Calu3 (cell line): ENCODE measurements at regions of chr9 and their contacts with region 1.

Region 1: DNA sequence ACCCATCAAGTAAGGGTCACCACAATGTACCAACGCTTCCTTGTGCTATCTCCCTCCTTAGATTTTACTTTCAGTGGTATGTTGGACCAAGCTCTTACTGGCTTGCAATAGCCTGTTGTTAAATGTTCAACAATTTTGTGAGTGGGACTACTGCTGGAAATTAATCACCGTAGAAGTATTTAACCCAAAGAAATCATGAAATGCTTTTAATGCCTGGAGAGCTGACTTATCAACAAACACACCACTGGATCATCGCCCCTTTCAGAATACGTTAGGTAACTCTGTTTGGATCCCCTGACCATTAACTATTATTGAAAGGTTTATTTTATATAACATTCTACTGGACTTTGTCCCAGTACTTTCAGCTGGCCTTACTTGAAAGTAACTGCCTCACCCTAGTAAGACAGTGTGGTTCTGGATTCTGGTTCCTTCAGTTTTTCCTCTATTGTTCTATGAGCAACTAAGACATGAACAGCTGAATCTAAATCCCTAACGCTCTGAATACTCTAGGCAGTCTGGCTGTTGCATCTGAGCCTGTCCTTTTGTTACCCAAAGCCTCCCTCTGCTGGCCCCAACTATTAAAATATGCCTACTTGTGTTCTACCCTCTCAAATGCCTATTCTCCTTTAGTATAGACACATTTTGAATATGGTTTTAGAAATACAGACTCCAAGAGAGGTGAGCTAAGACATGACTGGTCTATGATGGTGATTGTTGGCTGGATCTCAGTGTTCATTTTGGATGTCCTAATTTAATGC is 1203.4 kb upstream of the DMAC1 start:
- DNase-seq: peak; percentile 11
- H3K4me3 Mint-ChIP-seq: no peak overlapping the region
- H3K27ac Mint-ChIP-seq: no peak overlapping the region
- H3K4me1 Mint-ChIP-seq: no peaks in the 10 kb centered on the region
- H3K27me3 Mint-ChIP-seq: no peaks in the 10 kb centered on the region
- CTCF ChIP-seq: no peak

Region 2: DNA sequence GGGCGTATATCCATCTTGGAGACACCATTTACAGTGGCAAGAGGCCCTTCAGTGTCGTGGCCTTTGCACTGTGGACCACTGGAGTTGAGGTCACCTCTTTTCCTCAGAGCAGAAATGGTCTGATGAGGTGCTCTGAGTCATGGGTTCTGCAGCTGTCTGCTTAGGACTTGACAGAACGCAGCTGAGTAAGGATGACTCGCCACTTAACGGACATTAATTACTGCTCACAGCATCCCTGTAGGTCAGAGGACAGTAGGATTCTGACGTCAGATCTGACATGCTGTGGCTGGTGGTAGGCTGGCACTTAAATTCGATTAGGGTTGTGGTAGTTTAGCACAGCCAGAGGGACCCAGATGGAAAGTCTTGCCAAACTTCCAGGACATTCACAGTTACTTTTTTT is 1682.9 kb before region 1 on chr9:
- CTCF ChIA-PET with region 1: no interaction called
- intact Hi-C with region 1: loop called (anchors 5 kb)
- DNase-seq: no peak
- H3K4me3 Mint-ChIP-seq: no peak overlapping the region
- H3K27ac Mint-ChIP-seq: no peak overlapping the region
- H3K4me1 Mint-ChIP-seq: no peaks in the 10 kb centered on the region
- H3K27me3 Mint-ChIP-seq: peaks cover 26% of the 10 kb centered on the region
- CTCF ChIP-seq: no peak

Region 3: GRCh38 chr9:8660383-8660782 is 342.6 kb before region 1 on chr9:
- CTCF ChIA-PET with region 1: no interaction called
- intact Hi-C with region 1: loop called (anchors 10 kb)
- DNase-seq: peak; percentile 45
- H3K4me3 Mint-ChIP-seq: no peak overlapping the region
- H3K27ac Mint-ChIP-seq: no peak overlapping the region
- H3K4me1 Mint-ChIP-seq: peaks cover 14% of the 10 kb centered on the region
- H3K27me3 Mint-ChIP-seq: no peaks in the 10 kb centered on the region
- CTCF ChIP-seq: no peak

Region 4: GRCh38 chr9:8917956-8918739 is 84.9 kb before region 1 on chr9:
- CTCF ChIA-PET with region 1: no interaction called
- intact Hi-C with region 1: loop called (anchors 10 kb)
- DNase-seq: no peak
- H3K4me3 Mint-ChIP-seq: no peak overlapping the region
- H3K27ac Mint-ChIP-seq: no peak overlapping the region
- H3K4me1 Mint-ChIP-seq: no peaks in the 10 kb centered on the region
- H3K27me3 Mint-ChIP-seq: no peaks in the 10 kb centered on the region
- CTCF ChIP-seq: no peak

Region 5: GRCh38 chr9:8946461-8946860 is 56.5 kb before region 1 on chr9:
- CTCF ChIA-PET with region 1: no interaction called
- intact Hi-C with region 1: no loop called
- DNase-seq: no peak
- H3K4me3 Mint-ChIP-seq: no peak overlapping the region
- H3K27ac Mint-ChIP-seq: no peak overlapping the region
- H3K4me1 Mint-ChIP-seq: no peaks in the 10 kb centered on the region
- H3K27me3 Mint-ChIP-seq: no peaks in the 10 kb centered on the region
- CTCF ChIP-seq: no peak